Activated CD4-positive, alpha-beta T cell treated with anti-CD3 and anti-CD28 coated beads for 36 hours (primary cell): ENCODE measurements at regions of chr1 and their contacts with region 1.

Region 1: GRCh38 chr1:71521655-71522264 is 440.9 kb upstream of the ZRANB2 start:
- DNase-seq: peak; percentile 35
- ATAC-seq: no peak
- H3K4me3 Mint-ChIP-seq: no peak overlapping the region
- H3K27ac Mint-ChIP-seq: no peak overlapping the region
- H3K4me1 Mint-ChIP-seq: no peaks in the 10 kb centered on the region
- H3K27me3 Mint-ChIP-seq: no peaks in the 10 kb centered on the region

Region 2: DNA sequence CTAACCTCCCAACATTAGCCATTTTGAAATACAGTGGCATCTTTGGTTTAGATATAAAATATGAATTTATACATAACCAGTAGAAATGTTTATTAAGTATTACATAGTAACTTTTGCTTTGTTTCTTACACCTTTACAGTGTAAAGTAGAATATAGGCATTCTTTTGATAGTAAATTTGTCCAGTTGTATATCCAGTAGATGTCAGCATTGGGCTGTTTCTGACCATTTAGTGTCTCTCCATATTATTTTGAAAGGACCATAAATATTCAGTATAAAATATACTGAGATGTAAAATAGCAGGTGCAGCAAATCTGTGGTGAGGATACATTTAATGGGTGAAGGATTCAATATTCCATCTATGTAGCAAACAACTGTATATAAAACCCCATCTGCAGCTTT is 325.1 kb before region 1 on chr1:
- CTCF ChIA-PET with region 1: no interaction called
- POLR2A ChIA-PET with region 1: no interaction called
- intact Hi-C with region 1: loop called in 1 of 2 experiments (anchors 10 kb)
- DNase-seq: no peak
- ATAC-seq: no peak
- H3K4me3 Mint-ChIP-seq: no peak overlapping the region
- H3K27ac Mint-ChIP-seq: no peak overlapping the region
- H3K4me1 Mint-ChIP-seq: no peaks in the 10 kb centered on the region
- H3K27me3 Mint-ChIP-seq: peaks cover 2% of the 10 kb centered on the region

Region 3: GRCh38 chr1:71210718-71211117 is 311.0 kb before region 1 on chr1:
- CTCF ChIA-PET with region 1: no interaction called
- POLR2A ChIA-PET with region 1: no interaction called
- intact Hi-C with region 1: no loop called
- DNase-seq: no peak
- ATAC-seq: no peak
- H3K4me3 Mint-ChIP-seq: no peak overlapping the region
- H3K27ac Mint-ChIP-seq: no peak overlapping the region
- H3K4me1 Mint-ChIP-seq: no peaks in the 10 kb centered on the region
- H3K27me3 Mint-ChIP-seq: peaks cover 1% of the 10 kb centered on the region

Region 4: GRCh38 chr1:71502006-71502405 is 19.8 kb before region 1 on chr1:
- CTCF ChIA-PET with region 1: no interaction called
- POLR2A ChIA-PET with region 1: no interaction called
- intact Hi-C with region 1: no loop called
- DNase-seq: no peak
- ATAC-seq: no peak
- H3K4me3 Mint-ChIP-seq: no peak overlapping the region
- H3K27ac Mint-ChIP-seq: no peak overlapping the region
- H3K4me1 Mint-ChIP-seq: no peaks in the 10 kb centered on the region
- H3K27me3 Mint-ChIP-seq: no peaks in the 10 kb centered on the region